HEK293 (cell line): ENCODE measurements at regions of chr1 and their contacts with region 1.

Region 1: DNA sequence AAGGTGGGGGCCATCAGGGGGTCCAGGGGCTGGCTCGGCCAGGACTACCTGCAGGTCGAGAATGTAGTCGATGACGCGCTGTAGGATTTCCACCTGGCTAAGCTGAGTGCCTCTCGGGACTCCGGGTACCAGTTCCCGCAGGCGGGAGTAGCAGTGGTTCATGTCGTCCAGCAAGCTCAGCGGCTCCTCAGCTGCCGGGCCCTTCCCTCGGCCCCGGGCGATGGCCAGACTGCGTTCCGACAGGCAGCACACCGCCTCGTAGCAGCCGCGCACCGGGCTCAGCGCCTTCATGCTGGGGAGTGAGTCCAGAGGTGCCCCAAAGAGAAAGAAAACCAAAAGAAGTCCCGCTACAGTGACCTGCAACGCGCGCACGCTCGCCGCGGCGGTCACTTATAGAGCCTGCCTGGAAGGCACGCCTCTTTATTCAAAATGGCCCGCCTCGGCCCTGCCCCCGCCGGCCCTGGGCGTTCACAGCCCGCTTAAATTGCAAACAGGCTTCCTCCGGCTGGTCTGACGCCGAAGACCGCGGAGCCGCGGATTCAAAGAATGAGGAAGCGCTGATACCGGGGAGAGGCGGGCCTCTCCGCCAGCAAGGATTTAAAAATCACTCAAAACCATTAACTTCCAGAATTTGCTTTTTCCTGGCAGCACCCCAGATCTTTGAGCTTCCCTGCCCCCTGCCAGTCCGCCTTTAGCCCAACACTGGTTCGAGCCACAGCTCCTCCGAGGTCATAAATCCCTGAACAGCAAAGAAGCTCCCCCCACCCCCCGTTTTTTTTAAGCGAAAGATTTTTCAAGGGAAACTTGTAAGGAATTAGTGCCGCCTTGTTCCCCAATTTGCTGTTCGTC is at the start of gene ID3:
- H3K4me3 ChIP-seq: peak within 1 kb of the TSS; percentile 68
- H3K27ac ChIP-seq: peak within 1 kb of the TSS; percentile 97
- H3K4me1 ChIP-seq: peaks cover 37% of the 10 kb centered on the region
- CTCF ChIP-seq: no peak

Region 2: GRCh38 chr1:23530747-23531561 is 28.4 kb before region 1 on chr1 and contains the start of gene E2F2:
- CTCF ChIA-PET with region 1: no interaction called
- POLR2A ChIA-PET with region 1: interaction called, 22 read pairs
- H3K4me3 ChIP-seq: peak within 1 kb of the TSS; percentile 69
- H3K27ac ChIP-seq: peak within 1 kb of the TSS; percentile 89
- H3K4me1 ChIP-seq: peaks cover 2% of the 10 kb centered on the region; the same call in 1 of the 2 replicates
- CTCF ChIP-seq: peak; percentile 84

Region 3: GRCh38 chr1:23548704-23549143 is 10.6 kb before region 1 on chr1:
- CTCF ChIA-PET with region 1: interaction called, 5 read pairs
- POLR2A ChIA-PET with region 1: interaction called, 16 read pairs
- H3K4me3 ChIP-seq: no peak overlapping the region
- H3K27ac ChIP-seq: no peak overlapping the region
- H3K4me1 ChIP-seq: no peaks in the 10 kb centered on the region
- CTCF ChIP-seq: no peak

Region 4: GRCh38 chr1:23591460-23592208 is 32.3 kb after region 1 on chr1:
- CTCF ChIA-PET with region 1: interaction called, 3 read pairs
- POLR2A ChIA-PET with region 1: interaction called, 25 read pairs
- H3K4me3 ChIP-seq: no peak overlapping the region
- H3K27ac ChIP-seq: no peak overlapping the region
- H3K4me1 ChIP-seq: no peaks in the 10 kb centered on the region
- CTCF ChIP-seq: no peak

Region 5: GRCh38 chr1:23598424-23598823 is 39.1 kb after region 1 on chr1:
- CTCF ChIA-PET with region 1: interaction called, 3 read pairs
- POLR2A ChIA-PET with region 1: interaction called, 25 read pairs
- H3K4me3 ChIP-seq: no peak overlapping the region
- H3K27ac ChIP-seq: no peak overlapping the region
- H3K4me1 ChIP-seq: no peaks in the 10 kb centered on the region; the same call in 1 of the 2 replicates
- CTCF ChIP-seq: no peak

Region 6: DNA sequence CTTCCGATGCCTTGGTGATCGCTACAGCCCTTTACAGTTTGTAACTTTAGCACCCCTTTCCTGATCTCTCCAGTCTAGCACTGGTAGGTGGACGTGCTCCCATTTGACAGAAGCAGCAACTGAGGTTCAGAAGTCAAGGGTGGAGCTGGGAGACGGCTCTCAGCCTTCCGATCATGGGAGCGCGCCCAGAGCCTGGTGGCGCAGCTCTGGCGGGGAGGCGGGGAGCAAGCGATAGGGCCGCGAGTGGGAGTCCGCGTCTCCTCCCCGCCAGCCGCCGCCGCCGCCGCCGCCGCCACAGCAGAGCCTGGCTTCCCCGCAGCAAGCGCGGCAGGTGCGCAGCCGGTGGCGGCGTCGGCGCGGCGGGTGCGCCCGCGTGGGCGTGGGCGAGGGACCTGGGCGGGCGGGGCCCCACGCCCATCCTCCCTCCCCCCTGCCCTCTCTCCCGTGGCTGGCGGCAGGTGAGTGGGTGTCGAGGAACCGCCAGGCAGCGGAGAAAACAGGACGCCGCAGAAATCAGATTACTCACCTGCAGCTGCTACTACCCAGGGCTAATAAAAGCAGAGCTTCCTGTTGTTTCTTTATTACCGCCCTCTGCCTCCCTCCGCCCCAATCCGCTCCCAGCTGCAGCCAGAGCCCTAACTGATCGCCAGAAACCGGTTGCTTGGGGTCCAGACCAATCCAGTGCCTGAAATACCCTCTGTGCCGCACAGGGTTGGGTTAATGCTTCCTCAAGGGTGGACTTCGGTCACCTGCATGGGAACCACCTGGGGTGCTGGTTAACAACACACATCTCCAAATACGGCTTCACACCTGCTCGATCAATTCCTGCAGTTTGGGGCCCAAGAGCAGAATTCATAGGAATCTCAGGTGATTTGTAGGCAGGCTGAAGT is 60.2 kb after region 1 on chr1:
- CTCF ChIA-PET with region 1: interaction called, 5 read pairs
- POLR2A ChIA-PET with region 1: interaction called, 18 read pairs
- H3K4me3 ChIP-seq: peak overlapping the region; percentile 22
- H3K27ac ChIP-seq: no peak overlapping the region
- H3K4me1 ChIP-seq: no peaks in the 10 kb centered on the region
- CTCF ChIP-seq: no peak

Region 7: GRCh38 chr1:23679815-23680214 is 120.5 kb after region 1 on chr1:
- CTCF ChIA-PET with region 1: no interaction called
- POLR2A ChIA-PET with region 1: no interaction called
- H3K4me3 ChIP-seq: no peak overlapping the region
- H3K27ac ChIP-seq: no peak overlapping the region
- H3K4me1 ChIP-seq: no peaks in the 10 kb centered on the region
- CTCF ChIP-seq: no peak

Region 8: DNA sequence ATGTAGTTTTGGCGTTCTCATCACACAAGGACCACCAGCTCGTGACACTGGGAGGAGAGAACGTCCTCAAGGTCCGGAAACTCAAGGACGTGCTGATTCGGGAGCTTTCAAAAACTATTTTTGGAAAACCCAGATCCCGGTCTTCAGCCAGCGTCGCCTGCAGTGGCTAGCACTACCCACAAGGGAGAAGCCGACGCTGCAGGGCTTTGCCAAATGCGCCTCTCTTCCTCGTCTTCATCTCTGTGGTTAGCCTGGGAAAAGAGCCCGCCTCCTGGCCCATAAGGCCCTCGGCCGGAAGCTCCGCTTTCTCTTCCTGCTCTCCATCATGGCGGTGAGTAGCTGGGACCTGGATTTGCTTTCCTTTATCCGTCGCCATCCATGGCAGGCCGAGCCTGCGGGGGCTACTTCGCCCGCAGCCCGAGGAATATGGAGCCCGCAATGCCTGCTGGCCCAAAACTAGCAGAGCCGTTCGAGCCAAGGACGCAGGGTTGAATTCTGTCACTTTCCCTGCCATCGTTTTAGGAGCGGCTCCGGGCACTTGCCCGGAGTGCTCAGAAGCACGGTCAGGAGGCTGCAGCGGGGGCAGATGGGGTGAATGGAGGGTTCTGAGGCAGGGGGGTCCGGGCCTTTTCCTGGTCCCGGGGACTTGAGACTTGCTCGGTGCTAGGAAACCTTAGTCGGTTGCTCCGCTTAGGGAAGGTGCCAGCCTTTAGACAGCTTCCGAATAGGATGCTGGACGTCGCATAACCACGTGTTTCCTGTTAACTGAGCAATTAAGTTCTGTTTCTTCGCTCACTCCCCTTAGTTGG is 132.3 kb after region 1 on chr1 and contains the start of gene RPL11:
- CTCF ChIA-PET with region 1: interaction called, 6 read pairs
- POLR2A ChIA-PET with region 1: interaction called, 11 read pairs
- H3K4me3 ChIP-seq: peak within 1 kb of the TSS; percentile 99
- H3K27ac ChIP-seq: peak within 1 kb of the TSS; percentile 96
- H3K4me1 ChIP-seq: no peaks in the 10 kb centered on the region
- CTCF ChIP-seq: peak; percentile 51